GM10248 (cell line): ENCODE measurements at regions of chr6 and their contacts with region 1.

Region 1: GRCh38 chr6:51928320-51928719 is 159.1 kb downstream of the PKHD1 start:
- DNase-seq: peak; percentile 16
- CTCF ChIP-seq: no peak

Region 2: GRCh38 chr6:51908243-51908642 is 20.1 kb before region 1 on chr6:
- CTCF ChIA-PET with region 1: interaction called, 16 read pairs
- POLR2A ChIA-PET with region 1: interaction called, 5 read pairs
- DNase-seq: no peak
- CTCF ChIP-seq: no peak